Motor neuron (in vitro differentiated cells): ENCODE measurements at regions of chr7 and their contacts with region 1.

Region 1: GRCh38 chr7:26653430-26653911 is 210.9 kb downstream of the SKAP2 start:
- ATAC-seq: peak in 5 of 8 experiments; percentile 58 to 69 (median 65)
- H3K4me3 ChIP-seq: no peak overlapping the region
- H3K27ac ChIP-seq: no peak overlapping the region
- H3K4me1 ChIP-seq: peaks cover 67 to 100% of the 10 kb centered on the region in 2 donors

Region 2: DNA sequence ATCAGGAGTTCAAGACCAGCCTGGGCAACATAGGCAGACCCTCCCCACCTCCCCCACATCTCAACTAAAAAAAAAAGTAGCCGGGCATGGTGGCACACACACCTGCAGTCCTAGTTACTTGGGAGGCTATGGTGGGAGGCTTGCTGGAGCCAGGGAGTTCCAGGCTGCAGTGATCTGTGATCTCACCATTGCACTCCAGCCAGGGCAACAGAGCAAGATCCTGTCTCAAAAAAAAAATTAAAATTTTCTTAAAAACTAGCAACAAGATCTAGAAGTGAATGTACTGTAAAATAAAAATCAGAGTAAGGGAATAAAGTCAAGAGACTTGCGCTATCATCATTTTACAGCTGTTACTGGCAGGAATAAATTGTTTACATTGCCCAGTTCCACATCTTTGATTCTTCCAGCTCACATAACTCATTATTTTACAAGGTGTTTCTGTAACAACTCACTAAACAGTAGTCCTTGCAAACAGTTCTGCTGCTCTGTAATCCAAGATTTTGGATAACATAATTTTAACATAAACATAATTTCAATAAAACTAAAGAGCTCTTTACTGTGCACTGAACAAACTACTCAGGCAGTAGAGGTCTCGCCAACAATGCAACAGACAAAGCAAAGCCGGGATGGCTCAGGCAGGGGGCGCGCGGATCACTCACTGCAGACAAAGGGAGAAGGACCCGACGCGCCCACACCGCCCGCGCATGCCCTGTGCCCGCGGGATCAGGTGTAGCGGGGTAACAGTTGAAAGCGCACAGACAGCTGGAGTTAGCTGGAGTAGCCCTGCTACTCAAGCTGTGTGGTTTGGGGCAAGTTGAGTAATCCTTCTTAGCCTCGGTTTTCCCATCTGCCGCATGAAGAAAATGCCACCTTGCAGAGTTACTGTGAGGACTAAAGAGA is 574.8 kb before region 1 on chr7:
- in situ Hi-C with region 1: loop called in 1 of 9 experiments (anchors 25 kb)
- ATAC-seq: peak; percentile 78 to 100 (median 99)
- H3K4me3 ChIP-seq: peak overlapping the region in 2 of 5 donors; percentile 9 to 12
- H3K27ac ChIP-seq: no peak overlapping the region
- H3K4me1 ChIP-seq: peaks cover 12% of the 10 kb centered on the region in 2 donors

Region 3: GRCh38 chr7:26329520-26330255 is 323.8 kb before region 1 on chr7:
- in situ Hi-C with region 1: no loop called
- ATAC-seq: no peak
- H3K4me3 ChIP-seq: no peak overlapping the region
- H3K27ac ChIP-seq: no peak overlapping the region
- H3K4me1 ChIP-seq: no peaks in the 10 kb centered on the region

Region 4: GRCh38 chr7:26376175-26376917 is 277.1 kb before region 1 on chr7:
- in situ Hi-C with region 1: loop called in 3 of 9 experiments (anchors 10 to 25 kb)
- ATAC-seq: peak; percentile 66 to 80 (median 77)
- H3K4me3 ChIP-seq: peak overlapping the region; percentile 45 to 69 (median 56)
- H3K27ac ChIP-seq: peak overlapping the region; percentile 96
- H3K4me1 ChIP-seq: peaks cover 16 to 33% of the 10 kb centered on the region in 2 donors

Region 5: DNA sequence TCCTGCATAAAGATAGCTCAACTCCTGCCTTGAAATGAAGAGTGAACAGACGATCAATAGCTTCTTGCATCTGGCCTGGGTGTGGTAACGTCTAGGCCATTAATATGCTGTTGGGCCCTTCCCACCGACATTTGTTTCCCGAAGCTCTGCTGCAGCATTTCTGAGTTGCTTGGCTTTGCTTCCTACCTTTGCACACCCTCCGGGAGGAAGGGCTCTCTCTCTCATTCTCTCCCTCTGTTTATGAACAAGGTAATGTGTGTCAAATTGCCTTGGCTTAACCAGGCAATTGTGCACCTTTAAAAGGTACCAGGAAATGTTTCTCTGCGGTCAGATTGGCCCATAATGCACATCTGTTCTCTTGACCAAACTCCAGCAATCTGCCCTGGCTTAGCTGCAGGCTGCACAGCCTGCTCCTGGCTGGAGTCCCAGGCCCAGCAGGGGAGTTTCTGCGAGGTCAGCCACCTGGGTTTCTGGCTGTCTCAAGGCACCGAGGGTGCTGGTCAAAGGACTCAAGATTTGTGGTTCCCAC is 138.1 kb before region 1 on chr7:
- in situ Hi-C with region 1: loop called in 2 of 9 experiments (anchors 10 to 25 kb)
- ATAC-seq: peak; percentile 41 to 97 (median 85)
- H3K4me3 ChIP-seq: no peak overlapping the region
- H3K27ac ChIP-seq: peak overlapping the region; percentile 0 to 58
- H3K4me1 ChIP-seq: peaks cover 17 to 20% of the 10 kb centered on the region in 2 donors